PC-9 (cell line): ENCODE measurements at regions of chr1 and their contacts with region 1.

Region 1: DNA sequence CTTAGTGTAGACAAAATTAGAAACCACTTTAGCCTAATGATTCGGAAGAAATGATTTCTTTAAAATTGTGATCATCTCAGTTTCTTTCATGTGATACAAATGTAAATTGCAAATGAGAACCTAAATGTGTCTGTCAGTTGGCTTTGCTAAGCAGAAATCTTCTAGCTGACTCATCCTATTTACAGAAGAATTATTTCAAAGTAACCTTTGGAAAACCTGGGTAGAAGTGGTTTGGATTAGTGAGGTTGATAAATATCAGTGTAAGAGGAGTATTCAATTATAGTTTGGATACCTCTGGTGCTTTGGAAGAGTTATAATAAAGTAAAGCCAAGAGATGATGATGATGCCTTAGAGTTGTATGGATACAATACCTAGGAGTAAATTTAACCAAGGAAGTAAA is 37.4 kb downstream of the CC2D1B start:
- DNase-seq: no peak
- H3K4me3 ChIP-seq: no peak overlapping the region
- H3K27ac ChIP-seq: no peak overlapping the region
- H3K4me1 ChIP-seq: no peaks in the 10 kb centered on the region
- H3K27me3 ChIP-seq: no peaks in the 10 kb centered on the region
- CTCF ChIP-seq: no peak

Region 2: GRCh38 chr1:52237430-52237829 is 91.2 kb before region 1 on chr1:
- CTCF ChIA-PET with region 1: interaction called, 14 read pairs
- POLR2A ChIA-PET with region 1: no interaction called
- intact Hi-C with region 1: no loop called
- DNase-seq: no peak
- H3K4me3 ChIP-seq: no peak overlapping the region
- H3K27ac ChIP-seq: no peak overlapping the region
- H3K4me1 ChIP-seq: no peaks in the 10 kb centered on the region
- H3K27me3 ChIP-seq: no peaks in the 10 kb centered on the region
- CTCF ChIP-seq: no peak

Region 3: DNA sequence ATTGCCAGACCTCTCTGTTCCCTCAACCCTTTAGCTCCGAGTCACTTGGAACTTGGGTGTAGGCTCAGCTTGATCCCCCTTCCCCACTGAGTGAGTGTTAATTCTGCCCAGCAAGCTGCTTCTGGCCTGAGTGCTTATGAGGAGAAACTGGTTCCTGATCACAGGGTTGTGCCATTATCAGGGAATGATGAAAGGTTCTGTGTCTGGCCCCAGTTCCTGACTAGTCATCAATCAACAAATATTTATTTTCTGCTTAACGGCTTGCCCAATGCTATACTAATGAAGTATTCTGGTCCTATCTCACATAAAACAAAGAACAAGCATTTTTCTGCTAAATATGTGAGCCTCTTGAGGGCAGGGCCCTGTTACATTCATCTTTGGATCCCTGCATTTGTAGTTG is 16.6 kb after region 1 on chr1:
- CTCF ChIA-PET with region 1: no interaction called
- POLR2A ChIA-PET with region 1: no interaction called
- intact Hi-C with region 1: no loop called
- DNase-seq: no peak
- H3K4me3 ChIP-seq: no peak overlapping the region
- H3K27ac ChIP-seq: no peak overlapping the region
- H3K4me1 ChIP-seq: no peaks in the 10 kb centered on the region
- H3K27me3 ChIP-seq: no peaks in the 10 kb centered on the region
- CTCF ChIP-seq: no peak

Region 4: DNA sequence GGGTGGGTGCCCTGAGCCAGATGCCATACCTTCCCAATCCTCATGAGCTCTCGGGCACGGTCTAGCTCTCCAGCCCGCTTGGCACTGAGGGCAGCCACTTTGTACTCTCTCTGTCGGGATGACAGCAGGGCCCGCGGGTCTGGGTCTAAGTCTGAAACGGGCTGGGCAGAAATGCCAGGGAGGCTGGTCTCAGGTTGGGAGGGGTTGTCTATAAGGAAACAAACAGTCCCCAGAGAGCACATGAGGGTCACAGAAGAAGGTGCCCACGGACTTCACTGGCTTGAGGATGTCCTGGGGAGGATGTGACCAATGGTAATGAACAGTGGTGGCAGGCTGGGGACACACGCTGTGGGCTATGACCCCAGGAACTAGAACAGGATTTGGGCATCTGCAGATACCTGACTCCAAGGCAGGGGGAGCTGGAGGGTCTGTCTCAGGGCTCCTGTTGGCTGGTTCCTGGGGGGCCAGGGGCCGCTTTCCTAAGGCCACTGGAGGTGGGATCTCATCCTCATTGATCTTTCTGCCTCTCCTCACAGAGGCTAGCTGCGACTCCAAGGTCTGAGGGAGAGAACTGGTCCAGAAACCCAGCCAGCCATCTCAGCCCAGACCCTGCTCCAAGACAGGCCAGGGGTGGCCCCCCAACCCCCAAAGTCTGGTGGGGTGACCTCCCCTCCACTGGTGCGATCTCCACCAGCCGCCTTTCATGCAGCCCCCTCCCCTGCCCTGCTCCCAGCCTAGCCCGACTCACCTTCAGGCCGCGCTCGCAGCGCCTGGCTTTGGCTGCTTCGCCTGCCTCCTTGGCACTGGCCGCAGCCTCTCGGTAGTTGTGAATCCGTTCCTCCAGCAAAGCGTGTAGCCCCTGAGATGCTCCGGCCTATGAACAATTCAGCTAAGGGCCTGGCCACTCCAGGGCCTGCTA is 31.3 kb after region 1 on chr1:
- CTCF ChIA-PET with region 1: no interaction called
- POLR2A ChIA-PET with region 1: no interaction called
- intact Hi-C with region 1: no loop called
- DNase-seq: no peak
- H3K4me3 ChIP-seq: no peak overlapping the region
- H3K27ac ChIP-seq: no peak overlapping the region
- H3K4me1 ChIP-seq: peaks cover 6% of the 10 kb centered on the region
- H3K27me3 ChIP-seq: no peaks in the 10 kb centered on the region
- CTCF ChIP-seq: no peak

Region 5: GRCh38 chr1:53172426-53173128 is 844.0 kb after region 1 on chr1:
- CTCF ChIA-PET with region 1: no interaction called
- POLR2A ChIA-PET with region 1: no interaction called
- intact Hi-C with region 1: no loop called
- DNase-seq: no peak
- H3K4me3 ChIP-seq: no peak overlapping the region
- H3K27ac ChIP-seq: no peak overlapping the region
- H3K4me1 ChIP-seq: 0 out of 2 replicates have a peak, but pooled peaks cover 5% of the 10 kb centered on the region
- H3K27me3 ChIP-seq: no peaks in the 10 kb centered on the region
- CTCF ChIP-seq: peak; percentile 20; the same call in 1 of the 2 replicates